Posterior vena cava (tissue), 2 donors: ENCODE measurements at regions of chrX and their contacts with region 1.

Region 1: DNA sequence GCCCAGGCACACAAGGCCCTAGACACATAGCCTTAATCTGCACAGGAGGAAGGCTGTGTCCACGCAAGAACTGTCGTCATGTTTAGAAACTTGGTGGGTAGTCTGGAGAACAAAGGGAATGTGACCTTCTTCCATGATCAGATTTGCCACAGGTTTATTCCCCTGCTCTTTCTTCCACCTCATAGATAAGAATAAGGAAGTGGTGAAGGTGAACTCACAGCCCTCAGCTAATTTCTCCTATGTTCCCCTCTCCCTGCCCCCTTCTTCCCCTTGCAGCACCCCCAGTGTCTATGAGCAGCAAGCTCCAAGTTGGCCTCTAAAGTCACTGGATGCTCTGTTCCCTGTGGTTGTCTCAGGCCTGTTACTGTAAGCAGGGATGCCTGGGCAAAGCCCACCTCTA is 39.8 kb upstream of the LAS1L start:
- DNase-seq: no peak

Region 2: GRCh38 chrX:66437719-66438118 is 863.4 kb after region 1 on chrX:
- intact Hi-C with region 1: loop called in 1 of 2 experiments (anchors 5 kb)
- DNase-seq: no peak